ENCODE measurements at regions of chr5 and their contacts with region 1.

Region 1: DNA sequence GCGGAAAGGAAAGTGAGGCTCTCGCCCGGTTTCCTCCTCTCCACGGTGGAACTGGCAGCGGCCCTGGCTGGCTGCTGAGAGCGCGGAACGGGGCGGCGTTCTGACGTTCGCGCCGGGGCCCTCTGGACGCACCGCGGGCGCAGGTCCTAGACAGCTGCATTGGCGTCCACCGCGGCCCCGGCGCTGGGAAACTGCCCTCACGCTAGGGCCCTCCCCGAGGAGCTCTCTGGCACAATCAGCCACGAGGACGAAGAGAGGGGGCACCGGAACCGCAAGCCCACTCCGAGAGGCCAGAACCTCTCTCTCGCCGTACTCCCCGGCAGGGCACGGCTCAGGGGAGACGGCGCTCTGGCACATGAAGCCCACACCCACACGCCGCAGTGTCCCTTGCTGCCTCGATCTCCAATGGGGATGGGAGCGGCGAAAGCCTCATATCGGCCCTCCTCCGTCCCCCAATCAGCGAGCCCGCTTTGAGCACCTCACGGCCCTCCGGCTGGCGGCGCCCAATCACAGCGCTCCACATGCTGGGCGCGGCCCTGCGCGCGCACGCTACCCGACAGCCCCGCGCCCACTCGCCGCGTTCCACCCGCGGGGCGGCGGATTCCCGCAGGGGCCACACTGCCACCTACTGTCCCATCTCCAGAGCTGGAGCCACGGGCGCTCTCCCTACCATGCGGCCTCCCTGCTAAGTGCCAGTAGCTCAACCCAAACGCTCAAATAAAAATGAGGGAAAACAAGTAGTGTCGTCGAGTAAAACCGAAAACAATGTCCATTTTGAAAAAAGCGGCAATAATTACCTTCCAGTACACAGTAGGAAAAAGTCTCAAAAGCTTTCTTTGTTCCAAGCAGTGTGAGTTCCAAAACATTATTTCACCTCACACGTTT is 11.8 kb downstream of the MRPS27 start:
- DNase-seq: peak; percentile 96
- CTCF ChIP-seq: peak; percentile 91

Region 2: GRCh38 chr5:71652803-71653543 is 655.2 kb before region 1 on chr5:
- in situ Hi-C with region 1: no loop called
- DNase-seq: no peak
- CTCF ChIP-seq: no peak

Region 3: DNA sequence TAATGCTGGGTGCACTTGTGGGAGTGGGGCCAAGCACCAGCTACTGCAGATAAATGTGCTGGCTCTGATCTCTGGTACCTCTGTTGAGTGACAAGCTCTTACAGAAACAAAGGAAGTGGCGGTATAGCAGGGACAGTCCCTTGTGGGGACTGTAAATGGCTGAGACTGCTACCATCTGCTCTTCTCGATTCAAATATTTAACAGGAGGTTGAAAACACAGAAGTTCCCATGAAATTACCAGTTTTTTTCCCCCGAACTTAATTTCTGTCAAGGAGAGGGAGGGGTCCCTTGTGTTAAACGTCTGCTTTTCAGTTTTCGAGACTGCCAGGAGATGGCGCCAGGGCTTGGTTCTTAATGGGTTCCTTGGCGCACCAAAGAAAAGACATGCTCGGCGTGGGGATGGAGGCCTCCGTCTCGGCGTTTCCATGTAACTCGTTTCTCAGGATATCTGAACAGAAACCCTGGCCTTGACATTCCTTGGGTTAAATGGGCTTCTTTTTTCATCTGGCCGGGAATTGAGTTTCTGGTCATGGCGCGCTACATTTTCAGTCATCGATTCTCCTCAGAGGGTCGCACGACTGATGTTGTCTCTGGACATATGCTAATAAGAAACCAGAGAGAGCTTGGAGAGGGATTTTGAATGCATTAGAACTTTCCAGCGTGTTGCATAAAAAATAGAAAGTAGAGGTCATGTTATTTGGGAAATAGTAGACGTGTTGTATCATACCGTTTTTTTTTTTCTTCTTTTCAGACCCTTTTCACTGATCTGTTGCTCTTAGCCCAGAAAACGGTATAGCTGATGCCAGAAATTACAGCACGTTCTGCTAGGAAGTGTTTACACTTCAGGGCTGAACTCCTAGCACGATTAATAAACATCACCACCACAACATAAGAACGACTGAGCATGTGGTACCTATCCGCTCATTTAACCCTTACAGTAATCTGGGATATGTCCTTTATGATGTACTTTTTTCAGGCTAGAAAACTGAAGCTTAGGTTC is 525.1 kb before region 1 on chr5:
- in situ Hi-C with region 1: loop called (anchors 25 kb)
- DNase-seq: peak; percentile 58
- CTCF ChIP-seq: peak; percentile 39

Region 4: DNA sequence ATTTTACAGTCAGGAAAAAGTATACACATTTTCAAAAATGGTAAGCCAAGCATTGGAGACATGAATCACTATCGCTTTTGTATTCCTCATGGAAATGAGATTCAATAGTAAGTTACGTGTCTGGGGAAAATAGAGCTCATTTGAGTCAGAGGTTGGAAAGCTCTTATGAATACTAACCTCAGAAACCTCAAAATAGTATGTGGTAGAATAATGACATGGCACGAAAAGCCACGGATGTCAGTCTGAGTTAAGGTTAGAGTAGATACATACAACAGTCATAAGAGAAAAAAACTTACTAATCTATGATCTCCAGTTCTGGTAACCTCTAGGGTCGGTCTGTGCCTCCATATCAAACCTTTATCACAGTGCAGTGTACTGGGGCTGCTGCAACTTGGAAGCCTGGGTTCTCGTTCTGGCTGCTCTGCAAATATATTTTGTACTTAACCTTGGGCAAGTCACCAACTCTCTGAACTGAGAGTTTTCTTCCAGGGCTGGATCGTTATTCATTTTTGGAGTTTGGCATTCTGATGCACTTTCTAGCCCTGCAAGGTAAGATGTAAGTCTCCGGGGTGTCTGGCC is 169.2 kb before region 1 on chr5:
- in situ Hi-C with region 1: loop called (anchors 10 kb)
- DNase-seq: no peak
- CTCF ChIP-seq: no peak